B cell (primary cell): ENCODE measurements at regions of chr3 and their contacts with region 1.

Region 1: DNA sequence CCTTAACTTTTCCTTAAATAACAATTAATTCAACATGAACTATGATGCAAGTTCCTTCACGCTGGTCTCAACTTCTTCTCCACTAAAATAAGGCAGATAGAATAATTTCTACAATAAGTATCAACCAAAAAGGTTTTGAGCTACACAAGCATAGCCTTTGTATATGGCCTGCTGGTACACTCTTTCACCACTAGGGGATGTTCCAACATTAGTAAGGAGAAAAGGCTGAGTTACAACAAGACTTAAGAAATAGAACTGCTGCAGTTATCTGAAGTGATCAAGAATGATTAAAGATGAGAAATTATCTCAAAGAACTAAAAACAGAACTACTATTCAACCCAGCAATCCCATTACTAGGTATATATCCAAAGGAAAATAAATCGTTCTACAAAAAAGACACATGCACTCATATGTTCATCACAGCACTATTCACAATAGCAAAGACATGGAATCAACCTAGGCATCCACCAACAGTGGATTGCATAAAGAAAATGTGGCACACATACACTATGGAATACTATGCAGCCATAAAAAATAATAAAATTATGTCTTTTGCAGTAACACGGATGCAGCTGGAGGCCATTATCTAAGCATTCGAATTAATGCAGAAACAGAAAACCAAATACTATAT is 14.4 kb downstream of the ATP13A3 start:
- DNase-seq: peak; percentile 71
- ATAC-seq: peak; percentile 90
- H3K4me3 ChIP-seq: no peak overlapping the region
- H3K4me3 Mint-ChIP-seq: no peak overlapping the region
- H3K27ac ChIP-seq: no peak overlapping the region
- H3K27ac Mint-ChIP-seq: no peak overlapping the region
- H3K4me1 ChIP-seq: no peaks in the 10 kb centered on the region
- H3K4me1 Mint-ChIP-seq: peaks cover 9% of the 10 kb centered on the region
- H3K27me3 ChIP-seq: no peaks in the 10 kb centered on the region
- H3K27me3 Mint-ChIP-seq: no peaks in the 10 kb centered on the region
- CTCF ChIP-seq: peak; percentile 99

Region 2: DNA sequence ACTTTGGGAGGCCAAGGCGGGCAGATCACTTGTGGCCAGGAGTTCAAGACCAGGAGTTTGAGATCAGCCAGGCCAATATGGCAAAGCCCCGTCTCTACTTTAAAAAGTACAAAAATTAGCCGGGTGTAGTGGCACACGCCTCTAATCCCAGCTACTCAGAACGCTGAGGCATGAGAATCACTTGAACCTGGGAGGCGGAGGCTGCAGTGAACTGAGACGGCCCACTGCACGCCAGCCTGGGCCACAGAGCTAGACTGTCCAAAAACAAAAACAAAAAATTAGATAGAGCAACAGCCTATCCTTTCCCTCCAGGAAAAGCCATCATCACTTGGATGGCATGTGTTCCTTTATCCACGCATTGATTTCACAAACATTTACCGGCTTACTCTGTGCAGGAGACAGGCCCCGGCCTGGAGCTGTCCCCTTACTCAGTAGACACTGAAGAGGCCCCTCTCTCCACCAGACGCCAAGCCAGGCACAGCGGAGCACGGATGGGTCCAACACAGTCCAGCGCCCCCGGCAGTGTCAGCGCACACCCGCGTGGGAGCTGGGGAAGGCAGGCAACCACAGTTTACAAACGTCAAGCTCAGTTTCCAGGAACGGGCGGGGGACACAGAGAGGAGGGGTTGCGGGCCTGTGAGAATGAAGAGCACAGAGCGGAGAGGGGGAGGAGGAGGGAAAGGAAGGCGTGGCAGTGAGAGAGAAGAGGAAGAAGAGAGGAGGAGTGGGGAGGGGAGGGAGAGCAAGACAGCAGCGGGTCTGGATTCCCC is 76.4 kb before region 1 on chr3:
- CTCF ChIA-PET with region 1: no interaction called
- POLR2A ChIA-PET with region 1: no interaction called
- intact Hi-C with region 1: no loop called
- DNase-seq: peak; percentile 27
- ATAC-seq: peak; percentile 24
- H3K4me3 ChIP-seq: no peak overlapping the region
- H3K4me3 Mint-ChIP-seq: peak overlapping the region; percentile 74
- H3K27ac ChIP-seq: no peak overlapping the region
- H3K27ac Mint-ChIP-seq: no peak overlapping the region
- H3K4me1 ChIP-seq: peaks cover 27 to 32% of the 10 kb centered on the region in 2 donors
- H3K4me1 Mint-ChIP-seq: peaks cover 36% of the 10 kb centered on the region
- H3K27me3 ChIP-seq: peaks cover 0 to 39% (median 11%) of the 10 kb centered on the region in 4 experiments
- H3K27me3 Mint-ChIP-seq: peaks cover 37% of the 10 kb centered on the region
- CTCF ChIP-seq: no peak

Region 3: GRCh38 chr3:194486540-194487288 is 14.3 kb after region 1 on chr3 and contains the start of gene ATP13A3:
- CTCF ChIA-PET with region 1: interaction called, 49 read pairs
- POLR2A ChIA-PET with region 1: no interaction called
- intact Hi-C with region 1: no loop called
- DNase-seq: peak; percentile 95
- ATAC-seq: peak; percentile 81
- H3K4me3 ChIP-seq: peak within 1 kb of the TSS; percentile 63 to 92 (median 77)
- H3K4me3 Mint-ChIP-seq: peak within 1 kb of the TSS; percentile 93
- H3K27ac ChIP-seq: peak within 1 kb of the TSS; percentile 66 to 71
- H3K27ac Mint-ChIP-seq: peak within 1 kb of the TSS; percentile 92
- H3K4me1 ChIP-seq: peaks cover 32 to 50% of the 10 kb centered on the region in 2 donors
- H3K4me1 Mint-ChIP-seq: peaks cover 55% of the 10 kb centered on the region
- H3K27me3 ChIP-seq: no peaks in the 10 kb centered on the region
- H3K27me3 Mint-ChIP-seq: no peaks in the 10 kb centered on the region
- CTCF ChIP-seq: peak; percentile 5
- total RNA-seq, gene ATP13A3: 61.0 and 61.1 TPM in 2 replicates

Region 4: DNA sequence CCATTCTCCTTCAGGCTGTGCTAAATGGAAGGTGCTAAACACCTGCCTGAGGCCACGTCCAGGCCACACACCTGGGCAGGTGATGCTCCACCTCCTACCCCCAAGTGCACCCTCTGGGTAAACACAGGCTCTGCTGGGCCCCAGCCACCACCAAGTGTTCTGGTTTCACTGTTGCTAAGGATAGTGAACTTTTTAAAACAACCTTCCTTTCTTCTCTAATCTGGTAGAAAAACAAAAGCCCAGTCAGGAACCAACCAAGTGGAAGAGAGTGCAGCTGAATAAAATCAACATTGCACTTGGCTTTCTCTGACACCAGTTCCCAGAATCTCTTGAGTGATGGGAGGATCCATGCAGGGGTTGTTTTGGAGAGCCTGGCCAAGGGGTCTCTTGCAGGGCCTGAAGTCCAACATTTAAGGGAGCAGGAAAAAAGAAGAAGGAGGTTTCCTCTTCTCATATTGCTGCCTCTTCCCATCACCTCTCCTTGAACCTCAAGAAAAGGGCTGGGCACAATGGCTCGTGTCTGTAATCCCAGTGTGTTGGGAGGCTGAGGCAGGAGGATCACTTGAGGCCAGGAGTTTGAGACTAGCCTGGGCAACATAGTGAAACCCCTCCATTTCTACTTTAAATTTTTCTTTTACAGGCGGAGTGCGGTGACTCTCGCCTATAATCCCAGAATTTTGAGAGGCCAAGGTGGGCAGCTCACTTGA is 40.6 kb after region 1 on chr3:
- CTCF ChIA-PET with region 1: interaction called, 29 read pairs
- POLR2A ChIA-PET with region 1: no interaction called
- intact Hi-C with region 1: no loop called
- DNase-seq: no peak
- ATAC-seq: no peak
- H3K4me3 ChIP-seq: no peak overlapping the region
- H3K4me3 Mint-ChIP-seq: no peak overlapping the region
- H3K27ac ChIP-seq: no peak overlapping the region
- H3K27ac Mint-ChIP-seq: no peak overlapping the region
- H3K4me1 ChIP-seq: no peaks in the 10 kb centered on the region
- H3K4me1 Mint-ChIP-seq: no peaks in the 10 kb centered on the region
- H3K27me3 ChIP-seq: no peaks in the 10 kb centered on the region
- H3K27me3 Mint-ChIP-seq: no peaks in the 10 kb centered on the region
- CTCF ChIP-seq: no peak

Region 5: GRCh38 chr3:194536871-194537637 is 64.6 kb after region 1 on chr3:
- CTCF ChIA-PET with region 1: no interaction called
- POLR2A ChIA-PET with region 1: no interaction called
- intact Hi-C with region 1: no loop called
- DNase-seq: no peak
- ATAC-seq: no peak
- H3K4me3 ChIP-seq: no peak overlapping the region
- H3K4me3 Mint-ChIP-seq: no peak overlapping the region
- H3K27ac ChIP-seq: no peak overlapping the region
- H3K27ac Mint-ChIP-seq: no peak overlapping the region
- H3K4me1 ChIP-seq: peaks cover 0 to 3% of the 10 kb centered on the region in 2 donors
- H3K4me1 Mint-ChIP-seq: peaks cover 4% of the 10 kb centered on the region
- H3K27me3 ChIP-seq: no peaks in the 10 kb centered on the region
- H3K27me3 Mint-ChIP-seq: peaks cover 3% of the 10 kb centered on the region
- CTCF ChIP-seq: no peak

Region 6: GRCh38 chr3:194573691-194574437 is 101.5 kb after region 1 on chr3:
- CTCF ChIA-PET with region 1: interaction called, 53 read pairs
- POLR2A ChIA-PET with region 1: no interaction called
- intact Hi-C with region 1: loop called (anchors 1 kb)
- DNase-seq: peak; percentile 50
- ATAC-seq: peak; percentile 73
- H3K4me3 ChIP-seq: no peak overlapping the region
- H3K4me3 Mint-ChIP-seq: no peak overlapping the region
- H3K27ac ChIP-seq: no peak overlapping the region
- H3K27ac Mint-ChIP-seq: no peak overlapping the region
- H3K4me1 ChIP-seq: no peaks in the 10 kb centered on the region
- H3K4me1 Mint-ChIP-seq: peaks cover 2% of the 10 kb centered on the region
- H3K27me3 ChIP-seq: peaks cover 0 to 17% (median 8%) of the 10 kb centered on the region in 4 experiments
- H3K27me3 Mint-ChIP-seq: peaks cover 34% of the 10 kb centered on the region
- CTCF ChIP-seq: peak; percentile 47

Region 7: GRCh38 chr3:194592798-194593752 is 120.7 kb after region 1 on chr3:
- CTCF ChIA-PET with region 1: interaction called, 193 read pairs
- POLR2A ChIA-PET with region 1: interaction called, 3 read pairs
- intact Hi-C with region 1: loop called (anchors 1 kb)
- DNase-seq: peak; percentile 58
- ATAC-seq: peak; percentile 58
- H3K4me3 ChIP-seq: no peak overlapping the region
- H3K4me3 Mint-ChIP-seq: no peak overlapping the region
- H3K27ac ChIP-seq: no peak overlapping the region
- H3K27ac Mint-ChIP-seq: peak overlapping the region; percentile 41
- H3K4me1 ChIP-seq: peaks cover 3 to 15% of the 10 kb centered on the region in 2 donors
- H3K4me1 Mint-ChIP-seq: peaks cover 15% of the 10 kb centered on the region
- H3K27me3 ChIP-seq: no peaks in the 10 kb centered on the region
- H3K27me3 Mint-ChIP-seq: no peaks in the 10 kb centered on the region
- CTCF ChIP-seq: no peak

Region 8: DNA sequence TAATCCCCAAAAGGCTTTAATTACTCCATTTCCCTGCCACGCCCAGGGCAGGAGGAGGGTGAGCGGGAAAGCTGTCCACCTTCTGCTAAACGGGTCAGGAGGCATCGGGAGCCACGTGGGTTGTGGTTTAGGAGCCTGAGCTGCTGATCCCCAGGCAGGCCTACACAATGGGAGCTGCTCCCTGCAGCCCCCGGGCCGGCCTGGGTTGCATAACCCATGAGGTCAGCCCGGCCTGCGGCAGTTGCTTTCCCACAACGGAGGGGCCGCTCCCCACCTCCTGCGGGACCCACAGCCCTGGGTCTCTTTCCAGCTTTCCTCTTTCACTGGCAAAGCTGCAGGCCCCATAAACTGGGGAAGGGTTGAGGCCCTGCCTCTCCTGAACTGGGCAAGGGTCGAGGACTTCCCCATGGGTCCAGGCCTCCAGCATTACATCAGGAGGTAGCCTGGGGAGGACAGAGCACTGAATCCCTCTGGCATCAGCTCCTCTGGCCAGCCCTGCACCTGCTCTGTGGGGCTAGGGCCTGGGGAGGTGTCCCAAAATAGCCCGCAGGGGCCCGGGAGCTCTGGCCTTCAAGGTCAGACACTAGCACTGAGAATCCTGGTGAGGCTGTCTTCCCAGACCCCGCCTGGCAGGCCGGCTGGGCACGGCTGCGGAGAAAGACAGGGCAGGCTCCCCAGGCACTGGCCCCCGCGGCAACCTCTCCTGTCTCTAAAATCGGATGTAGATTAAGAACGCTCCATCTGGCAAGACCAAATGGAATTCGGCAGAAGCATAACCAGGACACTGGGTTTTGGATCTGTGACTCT is 1691.5 kb after region 1 on chr3:
- CTCF ChIA-PET with region 1: no interaction called
- POLR2A ChIA-PET with region 1: no interaction called
- intact Hi-C with region 1: no loop called
- DNase-seq: no peak
- ATAC-seq: no peak
- H3K4me3 ChIP-seq: no peak overlapping the region
- H3K4me3 Mint-ChIP-seq: no peak overlapping the region
- H3K27ac ChIP-seq: no peak overlapping the region
- H3K27ac Mint-ChIP-seq: no peak overlapping the region
- H3K4me1 ChIP-seq: peaks cover 13 to 15% of the 10 kb centered on the region in 2 donors
- H3K4me1 Mint-ChIP-seq: peaks cover 14% of the 10 kb centered on the region
- H3K27me3 ChIP-seq: no peaks in the 10 kb centered on the region
- H3K27me3 Mint-ChIP-seq: no peaks in the 10 kb centered on the region
- CTCF ChIP-seq: no peak